Activated CD8-positive, alpha-beta memory T cell treated with anti-CD3 and anti-CD28 coated beads, Interleukin-2, amount 10 ng/mL, durations not matched to agents 7 days and 5 days (primary cell): ENCODE measurements at regions of chr19 and their contacts with region 1.

Region 1: GRCh38 chr19:1087813-1088415 is 7.3 kb downstream of the POLR2E start:
- DNase-seq: no peak
- ATAC-seq: peak; percentile 23
- H3K4me3 Mint-ChIP-seq: peak overlapping the region; percentile 21
- H3K27ac Mint-ChIP-seq: peak overlapping the region; percentile 84
- H3K4me1 Mint-ChIP-seq: peaks cover 47% of the 10 kb centered on the region
- H3K27me3 Mint-ChIP-seq: no peaks in the 10 kb centered on the region

Region 2: DNA sequence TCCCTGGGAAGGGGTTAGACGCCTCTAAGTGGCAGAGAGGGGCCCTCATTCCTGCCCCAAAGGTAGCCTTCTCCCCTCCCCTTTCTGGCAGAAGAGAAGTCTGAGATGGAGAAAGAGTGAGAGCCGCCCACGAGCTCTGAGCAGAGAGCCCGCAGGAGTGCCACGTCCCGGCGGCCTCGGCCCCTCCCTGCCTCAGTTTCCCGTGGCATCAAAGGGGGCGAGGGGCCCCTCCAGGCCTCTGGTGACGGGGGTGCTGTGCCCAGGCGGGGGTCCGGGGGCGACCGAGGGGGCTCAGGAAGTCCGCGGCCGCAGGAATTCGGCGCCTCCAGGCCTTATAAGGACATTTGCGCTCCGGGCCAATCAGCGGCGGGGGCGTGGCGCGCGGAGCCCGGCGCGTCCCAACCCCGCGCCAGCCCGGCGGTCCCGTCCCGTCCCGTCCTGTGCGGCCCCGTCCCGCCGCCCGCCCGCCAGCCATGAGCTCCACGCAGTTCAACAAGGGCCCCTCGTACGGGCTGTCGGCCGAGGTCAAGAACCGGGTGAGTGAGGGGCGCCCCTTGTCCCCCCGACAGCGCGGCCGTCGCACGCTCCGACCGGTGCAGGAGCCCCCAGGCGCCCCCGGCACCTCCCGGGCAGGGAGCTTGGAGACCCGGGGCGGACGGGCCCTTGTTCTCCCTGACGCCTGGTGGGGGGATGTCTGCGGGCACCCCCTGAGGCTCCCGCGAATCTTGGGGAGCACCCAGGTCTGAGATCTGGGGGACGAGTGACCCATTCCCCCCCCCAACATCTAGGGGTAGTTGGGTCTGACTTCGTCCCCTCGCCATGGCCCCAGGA is 61.5 kb before region 1 on chr19 and contains the start of gene CNN2:
- CTCF ChIA-PET with region 1: interaction called, 16 read pairs
- DNase-seq: peak; percentile 79
- ATAC-seq: peak; percentile 69
- H3K4me3 Mint-ChIP-seq: peak within 1 kb of the TSS; percentile 91
- H3K27ac Mint-ChIP-seq: peak within 1 kb of the TSS; percentile 90
- H3K4me1 Mint-ChIP-seq: peaks cover 29% of the 10 kb centered on the region
- H3K27me3 Mint-ChIP-seq: no peaks in the 10 kb centered on the region
- total RNA-seq, gene CNN2: 295 to 296 TPM

Region 3: DNA sequence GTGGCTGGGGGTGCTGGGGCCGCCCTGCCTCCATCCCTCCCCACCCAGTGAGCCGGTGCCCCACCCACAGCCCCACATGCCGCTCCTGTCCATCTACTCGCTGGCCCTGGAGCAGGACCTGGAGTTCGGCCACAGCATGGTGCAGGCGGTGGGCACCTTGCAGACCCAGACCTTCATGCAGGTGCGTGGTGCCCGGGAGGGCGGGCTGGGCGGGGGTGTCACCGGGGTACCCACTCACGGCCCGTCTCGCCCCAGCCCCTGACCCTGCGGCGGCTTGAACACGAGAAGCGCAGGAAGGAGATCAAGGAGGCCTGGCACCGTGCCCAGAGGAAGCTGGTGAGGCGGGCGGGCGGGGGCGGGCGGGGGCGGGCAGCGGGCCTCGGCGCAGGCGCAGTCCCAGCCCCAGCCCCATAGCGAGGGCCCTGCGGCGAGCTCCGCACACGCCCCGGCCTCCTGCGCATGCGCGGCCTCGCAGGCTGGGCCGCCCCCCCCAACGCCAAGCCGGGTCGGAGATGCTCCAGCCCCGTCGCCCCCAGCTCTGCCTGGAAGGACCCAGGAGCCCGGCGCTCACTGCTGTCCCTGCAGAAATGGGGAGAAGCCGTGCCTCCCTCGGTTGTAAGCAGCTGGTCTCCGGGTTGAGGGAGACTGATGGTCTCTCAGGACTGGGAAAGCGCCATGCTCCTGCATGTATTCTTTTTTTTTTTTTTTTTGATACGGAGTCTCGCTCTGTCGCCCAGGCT is 13.2 kb before region 1 on chr19:
- CTCF ChIA-PET with region 1: interaction called, 16 read pairs
- DNase-seq: peak; percentile 88
- ATAC-seq: peak; percentile 34
- H3K4me3 Mint-ChIP-seq: peak overlapping the region; percentile 56
- H3K27ac Mint-ChIP-seq: peak overlapping the region; percentile 93
- H3K4me1 Mint-ChIP-seq: peaks cover 55% of the 10 kb centered on the region
- H3K27me3 Mint-ChIP-seq: no peaks in the 10 kb centered on the region